ENCODE measurements at regions of chr13 and their contacts with region 1.

Region 1: GRCh38 chr13:27533155-27533643 is 82.8 kb upstream of the MTIF3 start:
- DNase-seq: peak; percentile 85
- H3K4me3 ChIP-seq: peak overlapping the region; percentile 42 to 46
- H3K27ac ChIP-seq: no peak overlapping the region
- H3K4me1 ChIP-seq: peaks cover 0 to 3% of the 10 kb centered on the region in 2 experiments; a peak in 1 of 4 replicates
- H3K27me3 ChIP-seq: peaks cover 7% of the 10 kb centered on the region; the same call in 1 of the 2 replicates
- CTCF ChIP-seq: peak; percentile 93
- EP300 ChIP-seq: no peak
- RAD21 ChIP-seq: peak; percentile 82

Region 2: GRCh38 chr13:27079421-27079958 is 453.7 kb before region 1 on chr13:
- CTCF ChIA-PET with region 1: no interaction called
- POLR2A ChIA-PET with region 1: no interaction called
- DNase-seq: no peak
- H3K4me3 ChIP-seq: no peak overlapping the region
- H3K27ac ChIP-seq: peak overlapping the region; percentile 41 to 71; a peak in 3 of 4 replicates
- H3K4me1 ChIP-seq: peaks cover 3 to 19% of the 10 kb centered on the region in 2 experiments; a peak in 3 of 4 replicates
- H3K27me3 ChIP-seq: no peaks in the 10 kb centered on the region
- CTCF ChIP-seq: no peak
- EP300 ChIP-seq: peak; percentile 12 to 64; a peak in 2 of 4 replicates
- RAD21 ChIP-seq: no peak

Region 3: DNA sequence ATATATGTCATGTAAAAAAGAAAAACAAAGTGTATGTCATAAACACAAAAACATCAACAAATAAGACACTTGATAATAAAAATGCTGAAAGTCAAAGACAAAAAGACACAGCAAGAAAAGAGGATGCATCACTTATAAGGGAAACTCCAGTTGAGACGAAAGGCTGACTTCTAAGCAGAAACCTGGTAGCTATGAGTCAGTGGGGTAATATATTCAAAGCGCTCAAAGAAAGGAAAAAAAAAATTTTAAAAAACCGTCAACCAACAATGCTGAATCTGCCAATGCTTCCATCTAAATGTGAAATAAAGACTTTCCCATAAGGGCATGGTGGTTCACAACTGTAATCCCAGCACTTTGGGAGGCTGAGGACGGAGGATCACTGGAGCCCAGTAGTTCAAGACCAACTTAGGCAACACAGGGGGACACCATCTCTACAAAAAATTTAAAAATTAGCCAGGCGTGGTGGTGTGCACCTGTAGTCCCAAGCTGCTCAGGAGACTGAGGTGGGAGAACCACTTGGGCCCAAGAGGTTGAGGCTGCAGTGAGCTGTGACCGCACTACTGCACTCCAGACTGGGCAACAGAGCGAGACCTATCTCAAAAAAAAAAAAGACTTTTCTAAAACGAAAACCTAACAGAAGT is 385.5 kb before region 1 on chr13:
- CTCF ChIA-PET with region 1: no interaction called
- POLR2A ChIA-PET with region 1: no interaction called
- DNase-seq: no peak
- H3K4me3 ChIP-seq: no peak overlapping the region
- H3K27ac ChIP-seq: no peak overlapping the region
- H3K4me1 ChIP-seq: peaks cover 0 to 2% of the 10 kb centered on the region in 2 experiments; a peak in 1 of 4 replicates
- H3K27me3 ChIP-seq: no peaks in the 10 kb centered on the region
- CTCF ChIP-seq: no peak
- EP300 ChIP-seq: no peak
- RAD21 ChIP-seq: no peak

Region 4: DNA sequence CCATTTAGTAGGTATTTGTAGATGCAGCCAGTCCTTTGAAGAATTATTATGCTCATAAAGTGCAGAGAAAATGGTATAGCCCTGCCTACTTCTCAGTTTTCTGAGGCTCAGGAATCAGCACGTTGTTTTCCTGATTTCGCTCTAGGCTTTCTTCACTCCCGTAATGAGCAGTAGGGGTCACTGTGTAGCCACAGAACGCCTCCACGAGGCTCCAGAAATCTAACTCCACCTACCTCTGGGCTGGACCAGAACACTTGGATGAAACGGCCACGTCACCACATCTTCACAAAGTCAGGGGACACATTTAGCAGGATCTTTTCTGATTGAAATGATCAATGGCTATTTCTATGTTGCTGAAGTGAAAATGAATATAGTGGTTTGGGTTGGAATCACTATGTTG is 158.5 kb before region 1 on chr13:
- CTCF ChIA-PET with region 1: interaction called, 10 read pairs
- POLR2A ChIA-PET with region 1: no interaction called
- DNase-seq: peak; percentile 75
- H3K4me3 ChIP-seq: no peak overlapping the region; a peak in 1 of 4 replicates
- H3K27ac ChIP-seq: no peak overlapping the region
- H3K4me1 ChIP-seq: no peaks in the 10 kb centered on the region
- H3K27me3 ChIP-seq: peaks cover 62% of the 10 kb centered on the region
- CTCF ChIP-seq: peak; percentile 75
- EP300 ChIP-seq: no peak
- RAD21 ChIP-seq: peak; percentile 82

Region 5: GRCh38 chr13:27424246-27425157 is 108.7 kb before region 1 on chr13 and contains the start of gene GTF3A:
- CTCF ChIA-PET with region 1: no interaction called
- POLR2A ChIA-PET with region 1: no interaction called
- DNase-seq: peak; percentile 98
- H3K4me3 ChIP-seq: peak within 1 kb of the TSS; percentile 74 to 88
- H3K27ac ChIP-seq: peak within 1 kb of the TSS; percentile 64 to 67
- H3K4me1 ChIP-seq: peaks cover 10 to 21% of the 10 kb centered on the region in 2 experiments
- H3K27me3 ChIP-seq: no peaks in the 10 kb centered on the region
- CTCF ChIP-seq: no peak
- EP300 ChIP-seq: no peak
- RAD21 ChIP-seq: no peak
- polyA plus RNA-seq, gene GTF3A: 57.1 and 75.4 TPM in 2 replicates

Region 6: GRCh38 chr13:27516103-27516502 is 17.1 kb before region 1 on chr13:
- CTCF ChIA-PET with region 1: interaction called, 37 read pairs
- POLR2A ChIA-PET with region 1: no interaction called
- DNase-seq: no peak
- H3K4me3 ChIP-seq: no peak overlapping the region
- H3K27ac ChIP-seq: no peak overlapping the region
- H3K4me1 ChIP-seq: no peaks in the 10 kb centered on the region
- H3K27me3 ChIP-seq: peaks cover 11% of the 10 kb centered on the region; the same call in 1 of the 2 replicates
- CTCF ChIP-seq: no peak
- EP300 ChIP-seq: no peak
- RAD21 ChIP-seq: no peak

Region 7: DNA sequence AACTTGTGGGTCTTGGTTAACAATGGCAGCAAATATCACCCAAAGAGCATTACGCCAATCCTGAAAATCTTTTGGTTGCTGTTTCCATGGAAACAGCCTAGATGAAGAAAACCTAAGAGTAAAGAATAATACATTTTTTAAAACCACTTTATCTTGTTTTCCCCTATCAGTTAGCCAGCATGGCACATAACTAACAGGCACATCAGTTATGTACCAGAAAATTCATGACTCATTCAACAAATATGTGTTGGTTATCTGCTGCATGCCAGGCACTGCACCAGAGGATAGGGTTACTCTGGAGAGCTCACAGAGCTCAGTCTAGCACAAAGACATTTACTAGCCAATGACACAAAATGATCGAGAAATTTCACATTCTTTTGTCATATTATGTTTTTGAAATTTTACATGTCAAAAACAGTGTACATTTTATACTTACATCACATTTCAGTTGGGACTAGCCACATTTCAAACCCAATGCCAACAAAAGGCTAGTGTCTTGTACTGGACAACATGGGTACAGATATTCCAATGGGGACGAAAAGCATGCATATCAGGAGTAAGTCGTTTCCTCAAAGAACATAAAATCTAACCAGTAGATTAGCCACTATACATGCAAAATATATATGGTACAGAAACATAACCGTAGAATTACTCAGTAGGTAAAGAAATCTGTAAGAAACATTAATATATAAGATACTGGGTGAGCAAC is 66.8 kb after region 1 on chr13:
- CTCF ChIA-PET with region 1: interaction called, 11 read pairs
- POLR2A ChIA-PET with region 1: no interaction called
- DNase-seq: peak; percentile 17
- H3K4me3 ChIP-seq: no peak overlapping the region
- H3K27ac ChIP-seq: peak overlapping the region; percentile 36 to 47; a peak in 3 of 4 replicates
- H3K4me1 ChIP-seq: peaks cover 0 to 10% of the 10 kb centered on the region in 2 experiments; a peak in 1 of 4 replicates
- H3K27me3 ChIP-seq: no peaks in the 10 kb centered on the region
- CTCF ChIP-seq: no peak
- EP300 ChIP-seq: peak in 1 of 2 experiments; percentile 66; a peak in 1 of 4 replicates
- RAD21 ChIP-seq: no peak

Region 8: DNA sequence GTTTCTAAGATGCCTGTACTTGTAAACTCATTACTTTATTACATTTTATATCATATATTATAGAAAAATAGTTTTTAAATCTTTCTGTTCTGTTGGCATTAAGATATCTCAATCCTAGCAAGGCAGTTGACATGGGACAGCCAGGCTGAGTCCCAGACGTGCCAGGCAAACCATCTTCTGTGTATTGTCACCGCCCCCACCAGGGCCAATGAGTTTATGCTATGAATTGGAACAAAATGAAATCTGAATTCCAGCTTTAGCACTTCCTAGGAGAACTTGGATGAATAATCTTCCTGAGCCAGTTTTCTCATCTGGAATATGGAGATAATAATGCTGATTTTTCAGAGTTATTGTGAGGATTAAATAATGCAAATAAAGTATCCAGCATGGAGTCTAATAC is 179.2 kb after region 1 on chr13:
- CTCF ChIA-PET with region 1: interaction called, 11 read pairs
- POLR2A ChIA-PET with region 1: no interaction called
- DNase-seq: peak; percentile 26
- H3K4me3 ChIP-seq: no peak overlapping the region
- H3K27ac ChIP-seq: no peak overlapping the region
- H3K4me1 ChIP-seq: no peaks in the 10 kb centered on the region
- H3K27me3 ChIP-seq: peaks cover 8% of the 10 kb centered on the region; the same call in 1 of the 2 replicates
- CTCF ChIP-seq: no peak
- EP300 ChIP-seq: no peak
- RAD21 ChIP-seq: peak; percentile 70

Region 9: GRCh38 chr13:27789153-27789494 is 255.9 kb after region 1 on chr13:
- CTCF ChIA-PET with region 1: interaction called, 25 read pairs
- POLR2A ChIA-PET with region 1: no interaction called
- DNase-seq: no peak
- H3K4me3 ChIP-seq: no peak overlapping the region
- H3K27ac ChIP-seq: no peak overlapping the region
- H3K4me1 ChIP-seq: peaks cover 0 to 6% of the 10 kb centered on the region in 2 experiments; a peak in 2 of 4 replicates
- H3K27me3 ChIP-seq: peaks cover 65% of the 10 kb centered on the region
- CTCF ChIP-seq: no peak
- EP300 ChIP-seq: no peak
- RAD21 ChIP-seq: no peak

Region 10: DNA sequence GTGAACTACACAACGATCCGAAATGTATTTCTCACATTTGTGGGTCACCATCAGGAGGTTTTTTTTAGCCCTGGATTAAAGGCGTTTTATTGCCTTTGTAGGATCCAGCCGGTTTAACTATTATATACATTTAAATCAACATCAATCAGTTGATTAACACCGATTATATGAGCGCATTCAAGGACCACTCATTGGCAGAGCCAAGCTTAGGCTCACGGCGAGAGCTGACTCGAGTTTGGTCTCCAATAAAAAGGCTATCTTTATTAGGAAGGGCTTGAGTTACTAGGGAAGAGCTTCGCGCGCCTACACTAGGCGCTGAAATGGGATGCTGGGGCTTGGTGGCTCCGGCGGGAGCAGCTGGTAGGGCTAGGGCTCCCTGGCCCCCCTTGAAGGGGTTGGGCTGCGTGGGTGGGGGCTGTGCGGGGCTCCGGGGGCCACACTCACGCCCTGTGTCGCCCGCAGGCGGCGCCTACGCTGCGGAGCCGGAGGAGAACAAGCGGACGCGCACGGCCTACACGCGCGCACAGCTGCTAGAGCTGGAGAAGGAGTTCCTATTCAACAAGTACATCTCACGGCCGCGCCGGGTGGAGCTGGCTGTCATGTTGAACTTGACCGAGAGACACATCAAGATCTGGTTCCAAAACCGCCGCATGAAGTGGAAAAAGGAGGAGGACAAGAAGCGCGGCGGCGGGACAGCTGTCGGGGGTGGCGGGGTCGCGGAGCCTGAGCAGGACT is 390.8 kb after region 1 on chr13:
- CTCF ChIA-PET with region 1: no interaction called
- POLR2A ChIA-PET with region 1: no interaction called
- DNase-seq: no peak
- H3K4me3 ChIP-seq: no peak overlapping the region
- H3K27ac ChIP-seq: no peak overlapping the region
- H3K4me1 ChIP-seq: no peaks in the 10 kb centered on the region
- H3K27me3 ChIP-seq: peaks cover 98% of the 10 kb centered on the region
- CTCF ChIP-seq: no peak
- EP300 ChIP-seq: no peak
- RAD21 ChIP-seq: no peak